WTC11 (cell line): ENCODE measurements at regions of chr2 and their contacts with region 1.

Region 1: DNA sequence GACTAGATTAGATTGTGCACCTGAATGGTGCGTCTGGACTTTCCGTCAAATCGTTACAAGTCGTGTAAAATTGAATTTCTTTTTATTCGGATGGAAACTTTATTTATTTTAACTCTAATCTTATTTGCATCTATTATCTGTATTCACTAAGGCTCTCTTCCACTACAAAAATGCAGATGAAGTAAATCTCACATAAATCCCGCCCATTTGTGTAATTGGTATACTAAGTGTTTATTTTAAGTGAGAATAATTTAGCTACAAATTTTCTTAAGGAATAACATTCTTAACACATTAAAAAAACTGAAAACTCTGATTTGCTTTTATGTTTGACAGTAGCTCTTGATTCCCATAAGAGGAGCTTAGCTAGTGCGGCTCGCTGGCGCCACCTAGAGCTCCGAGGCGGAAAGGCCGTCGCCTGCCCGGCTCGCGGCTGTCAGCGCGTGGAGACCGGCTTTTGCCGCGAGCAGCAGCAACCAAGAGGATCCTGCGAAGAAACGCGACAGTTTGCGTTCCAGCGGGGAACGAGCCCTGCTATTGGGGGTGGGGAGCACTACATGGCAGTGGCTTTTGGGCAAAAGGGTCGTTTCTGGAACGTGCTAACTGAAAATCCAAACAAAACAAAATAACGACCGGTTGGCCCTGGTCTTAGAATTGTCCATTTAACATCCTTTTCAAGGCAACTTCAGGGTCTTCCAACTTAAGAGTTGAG is 6.7 kb downstream of the SP9 start:
- DNase-seq: peak; percentile 92
- ATAC-seq: peak; percentile 2; the same call in 1 of the 2 replicates
- H3K4me3 Mint-ChIP-seq: peak overlapping the region; percentile 71
- H3K27ac Mint-ChIP-seq: no peak overlapping the region
- H3K4me1 Mint-ChIP-seq: peaks cover 61% of the 10 kb centered on the region
- H3K27me3 Mint-ChIP-seq: peaks cover 93% of the 10 kb centered on the region
- CTCF ChIP-seq: peak; percentile 95

Region 2: GRCh38 chr2:174145827-174146226 is 195.6 kb before region 1 on chr2:
- CTCF ChIA-PET with region 1: interaction called, 12 read pairs
- POLR2A ChIA-PET with region 1: no interaction called
- DNase-seq: peak; percentile 26
- ATAC-seq: peak; percentile 77
- H3K4me3 Mint-ChIP-seq: no peak overlapping the region
- H3K27ac Mint-ChIP-seq: no peak overlapping the region
- H3K4me1 Mint-ChIP-seq: no peaks in the 10 kb centered on the region
- H3K27me3 Mint-ChIP-seq: no peaks in the 10 kb centered on the region
- CTCF ChIP-seq: no peak

Region 3: GRCh38 chr2:174158003-174158402 is 183.4 kb before region 1 on chr2:
- CTCF ChIA-PET with region 1: interaction called, 30 read pairs
- POLR2A ChIA-PET with region 1: no interaction called
- DNase-seq: peak; percentile 69
- ATAC-seq: peak; percentile 97
- H3K4me3 Mint-ChIP-seq: no peak overlapping the region
- H3K27ac Mint-ChIP-seq: no peak overlapping the region
- H3K4me1 Mint-ChIP-seq: peaks cover 11% of the 10 kb centered on the region
- H3K27me3 Mint-ChIP-seq: no peaks in the 10 kb centered on the region
- CTCF ChIP-seq: no peak

Region 4: DNA sequence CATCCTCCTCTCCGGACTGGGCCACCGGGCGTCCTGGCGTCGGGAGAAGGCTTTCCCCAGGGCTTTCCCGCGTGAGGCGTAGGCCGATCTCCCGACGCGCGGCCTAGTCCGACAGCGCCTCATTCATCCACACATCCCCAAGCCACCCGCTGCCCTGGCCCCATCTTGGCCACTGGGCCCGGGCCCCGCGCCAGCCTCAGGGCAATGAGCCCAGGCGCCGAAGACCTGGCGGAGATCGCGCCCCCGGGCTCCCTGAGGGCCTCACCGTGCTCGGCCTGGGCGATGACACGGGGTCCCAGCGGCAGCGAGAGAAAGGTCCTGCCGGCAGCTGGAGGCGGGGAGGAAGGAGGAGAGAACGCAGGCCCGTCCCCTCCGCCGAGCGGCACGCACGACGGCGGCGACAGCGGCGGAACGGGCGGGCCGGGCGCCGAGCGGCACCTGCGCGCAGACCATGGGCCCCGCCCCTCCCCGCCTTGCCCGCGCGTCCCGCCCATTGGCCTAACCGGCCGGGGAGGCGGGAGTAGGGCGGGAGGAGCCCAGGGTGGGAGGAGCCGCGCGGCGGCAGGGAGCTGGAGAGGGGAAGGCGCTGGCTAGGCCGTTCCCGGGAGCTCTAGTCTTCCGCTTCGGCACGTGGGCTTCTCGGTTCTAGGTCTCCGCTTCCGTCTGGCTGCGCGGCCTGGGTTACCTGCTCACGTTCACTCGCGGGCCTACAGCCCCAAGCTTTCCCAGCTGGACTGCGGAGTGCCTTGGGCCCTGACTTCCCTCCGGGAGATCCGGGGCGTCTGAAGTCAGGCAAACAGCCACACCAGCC is 93.0 kb before region 1 on chr2 and contains the start of gene OLA1:
- CTCF ChIA-PET with region 1: interaction called, 17 read pairs
- POLR2A ChIA-PET with region 1: no interaction called
- DNase-seq: peak; percentile 98
- ATAC-seq: peak; percentile 97
- H3K4me3 Mint-ChIP-seq: peak within 1 kb of the TSS; percentile 76
- H3K27ac Mint-ChIP-seq: peak within 1 kb of the TSS; percentile 89
- H3K4me1 Mint-ChIP-seq: peaks cover 22% of the 10 kb centered on the region
- H3K27me3 Mint-ChIP-seq: peaks cover 17% of the 10 kb centered on the region
- CTCF ChIP-seq: no peak
- total RNA-seq, gene OLA1: 104 to 109 TPM (median 107 TPM) in 3 replicates

Region 5: GRCh38 chr2:174326161-174327020 is 15.0 kb before region 1 on chr2:
- CTCF ChIA-PET with region 1: interaction called, 56 read pairs
- POLR2A ChIA-PET with region 1: interaction called, 4 read pairs
- DNase-seq: peak; percentile 54
- ATAC-seq: peak; percentile 25
- H3K4me3 Mint-ChIP-seq: peak overlapping the region; percentile 87
- H3K27ac Mint-ChIP-seq: no peak overlapping the region
- H3K4me1 Mint-ChIP-seq: peaks cover 46% of the 10 kb centered on the region
- H3K27me3 Mint-ChIP-seq: peaks cover 91% of the 10 kb centered on the region
- CTCF ChIP-seq: no peak